PC-3 (cell line): ENCODE measurements at regions of chr7 and their contacts with region 1.

Region 1: DNA sequence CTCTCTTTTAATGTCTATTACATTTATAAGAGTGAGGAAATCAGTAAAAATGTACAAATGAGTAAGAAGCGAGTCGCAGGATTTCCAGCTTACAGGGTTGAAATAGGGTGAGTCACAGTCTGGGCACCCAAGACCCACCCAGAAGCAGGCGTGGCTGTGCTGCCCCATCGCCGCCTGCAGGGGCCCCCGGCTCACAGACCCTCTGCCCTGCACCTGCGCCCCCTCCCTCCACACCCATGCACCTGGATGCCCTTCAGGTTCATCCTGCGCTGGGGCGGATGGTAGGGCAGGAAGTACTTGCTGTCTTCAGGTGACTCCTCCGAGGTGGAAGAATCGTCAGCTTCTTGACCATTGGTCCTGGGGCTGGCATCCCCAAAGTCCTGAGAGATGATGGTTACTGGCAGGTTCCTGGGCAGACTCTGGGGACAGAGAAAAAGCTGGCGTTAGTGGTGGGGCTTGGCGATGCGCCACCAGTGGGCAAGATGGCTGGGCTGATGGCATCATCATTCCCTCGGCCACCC is 90.2 kb upstream of the GNA12 start:
- DNase-seq: peak; percentile 64
- ATAC-seq: peak; percentile 87
- H3K4me3 ChIP-seq: no peak overlapping the region
- H3K27ac ChIP-seq: no peak overlapping the region
- H3K4me1 ChIP-seq: peaks cover 6% of the 10 kb centered on the region; the same call in 1 of the 2 replicates
- H3K27me3 ChIP-seq: peaks cover 4% of the 10 kb centered on the region; the same call in 1 of the 2 replicates
- CTCF ChIP-seq: no peak

Region 2: DNA sequence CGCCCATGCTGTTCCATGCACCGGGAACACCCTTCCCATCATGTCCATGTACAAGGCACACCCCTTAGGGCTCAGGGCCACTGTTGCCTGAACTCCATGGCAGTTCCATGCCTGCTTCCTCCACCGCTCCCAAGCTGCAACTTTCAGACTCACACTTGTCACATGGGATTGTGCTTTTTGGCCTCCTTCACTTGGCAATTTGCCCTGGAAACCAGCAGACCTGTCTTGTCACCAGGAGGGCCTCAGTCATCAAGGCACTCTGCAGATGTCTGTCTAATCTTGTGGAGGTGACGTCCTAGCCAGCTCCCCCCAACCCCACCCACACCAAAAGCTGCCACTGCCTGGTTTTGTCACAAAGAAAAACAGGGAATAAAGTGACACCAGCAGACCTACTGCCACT is 61.9 kb after region 1 on chr7:
- CTCF ChIA-PET with region 1: no interaction called
- POLR2A ChIA-PET with region 1: interaction called, 14 read pairs
- intact Hi-C with region 1: no loop called
- DNase-seq: no peak
- ATAC-seq: no peak
- H3K4me3 ChIP-seq: no peak overlapping the region
- H3K27ac ChIP-seq: no peak overlapping the region
- H3K4me1 ChIP-seq: no peaks in the 10 kb centered on the region
- H3K27me3 ChIP-seq: peaks cover 13% of the 10 kb centered on the region
- CTCF ChIP-seq: no peak